Endothelial cell of umbilical vein (primary cell): ENCODE measurements at regions of chr3 and their contacts with region 1.

Region 1: GRCh38 chr3:151918253-151919029 is 45.0 kb downstream of the SUCNR1 start:
- DNase-seq: peak; percentile 72
- H3K4me3 ChIP-seq: no peak overlapping the region
- H3K27ac ChIP-seq: peak overlapping the region; percentile 14
- H3K4me1 ChIP-seq: peaks cover under 1% of the 10 kb centered on the region
- H3K27me3 ChIP-seq: no peaks in the 10 kb centered on the region
- CTCF ChIP-seq: peak; percentile 34 to 43
- POLR2A ChIP-seq: no peak

Region 2: DNA sequence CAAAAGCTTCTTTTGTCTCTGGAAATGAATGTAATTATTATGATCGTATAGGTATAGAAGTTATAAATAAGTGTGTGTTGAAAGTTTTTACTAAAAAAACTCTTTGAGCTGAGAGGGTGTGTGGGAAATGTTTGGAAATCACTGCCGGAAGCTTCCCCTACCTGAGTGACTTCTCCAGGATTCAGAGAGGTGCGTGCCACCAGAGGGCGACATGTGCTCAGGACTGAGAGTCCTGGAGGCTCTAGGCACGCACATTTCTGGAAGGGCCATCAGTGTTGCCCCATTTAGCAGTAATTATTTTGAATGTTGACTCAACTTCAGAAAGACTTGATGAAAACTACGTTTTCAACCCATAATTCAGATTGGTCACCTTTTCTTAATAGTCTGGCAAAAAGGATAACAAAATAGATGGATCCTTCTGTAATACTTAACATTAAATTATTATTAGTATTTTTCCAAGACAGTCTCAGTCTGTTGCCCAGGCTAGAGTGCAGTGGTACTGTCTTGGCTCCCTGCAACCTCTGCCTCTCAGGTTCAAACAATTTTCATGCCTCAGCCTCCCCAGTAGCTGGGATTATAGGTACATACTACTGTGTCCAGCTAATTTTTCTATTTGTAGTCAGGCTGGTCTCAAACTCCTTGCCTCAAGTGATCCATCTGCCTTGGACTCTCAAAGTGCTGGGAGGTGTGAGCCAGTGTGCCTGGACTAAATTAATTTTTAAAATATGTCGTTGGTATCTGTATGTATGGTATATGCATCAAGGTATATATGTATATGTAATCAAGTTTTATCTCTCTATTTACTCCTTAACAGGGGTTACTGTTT is 750.0 kb before region 1 on chr3:
- CTCF ChIA-PET with region 1: interaction called, 4 read pairs
- POLR2A ChIA-PET with region 1: no interaction called
- dilution Hi-C with region 1: no loop called
- intact Hi-C with region 1: loop called (anchors 1 kb)
- DNase-seq: peak; percentile 38
- H3K4me3 ChIP-seq: no peak overlapping the region
- H3K27ac ChIP-seq: no peak overlapping the region
- H3K4me1 ChIP-seq: no peaks in the 10 kb centered on the region
- H3K27me3 ChIP-seq: no peaks in the 10 kb centered on the region
- CTCF ChIP-seq: peak; percentile 68 to 76
- POLR2A ChIP-seq: no peak

Region 3: GRCh38 chr3:151282921-151283320 is 635.5 kb before region 1 on chr3:
- CTCF ChIA-PET with region 1: no interaction called
- POLR2A ChIA-PET with region 1: no interaction called
- dilution Hi-C with region 1: no loop called
- intact Hi-C with region 1: loop called (anchors 1 kb)
- DNase-seq: peak; percentile 58
- H3K4me3 ChIP-seq: no peak overlapping the region
- H3K27ac ChIP-seq: no peak overlapping the region
- H3K4me1 ChIP-seq: no peaks in the 10 kb centered on the region
- H3K27me3 ChIP-seq: peaks cover 0 to 6% of the 10 kb centered on the region in 2 experiments
- CTCF ChIP-seq: peak; percentile 30 to 42
- POLR2A ChIP-seq: no peak

Region 4: GRCh38 chr3:151439652-151440129 is 478.8 kb before region 1 on chr3:
- CTCF ChIA-PET with region 1: interaction called, 54 read pairs
- POLR2A ChIA-PET with region 1: no interaction called
- dilution Hi-C with region 1: no loop called
- intact Hi-C with region 1: loop called (anchors 1 kb)
- DNase-seq: peak; percentile 65
- H3K4me3 ChIP-seq: no peak overlapping the region
- H3K27ac ChIP-seq: no peak overlapping the region
- H3K4me1 ChIP-seq: no peaks in the 10 kb centered on the region
- H3K27me3 ChIP-seq: no peaks in the 10 kb centered on the region
- CTCF ChIP-seq: peak; percentile 45 to 51
- POLR2A ChIP-seq: no peak

Region 5: DNA sequence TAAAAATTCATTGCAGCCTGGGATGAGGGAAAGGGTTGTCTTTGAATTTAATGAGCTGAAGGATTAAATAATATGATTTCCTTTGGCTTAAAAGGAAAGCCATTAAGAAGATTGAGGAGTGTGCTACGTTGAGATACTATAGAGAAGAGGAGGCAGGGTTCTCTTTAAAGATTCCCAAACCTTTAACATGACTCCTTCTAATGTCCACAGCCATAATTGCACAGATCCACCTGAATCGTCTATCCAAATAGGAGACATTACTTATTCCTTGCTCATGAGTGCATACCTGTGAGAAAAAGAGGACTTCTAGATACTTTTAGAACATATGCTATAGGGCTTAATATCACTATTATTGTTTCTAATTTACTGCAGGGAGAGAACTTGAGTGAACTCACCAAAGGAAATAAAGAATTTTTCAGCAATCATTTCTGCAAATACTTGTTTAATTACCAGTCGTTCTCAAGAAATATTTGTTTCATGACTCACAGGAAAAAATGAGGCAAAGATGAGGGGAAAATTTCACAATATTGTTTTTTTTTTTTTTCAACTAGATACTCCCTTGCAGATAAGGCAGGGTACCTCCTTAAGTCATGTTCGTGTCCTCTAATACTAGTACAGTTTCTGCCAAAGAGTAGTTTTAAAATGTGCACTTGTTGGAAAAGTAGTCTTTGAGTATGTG is 53.9 kb before region 1 on chr3:
- CTCF ChIA-PET with region 1: interaction called, 4 read pairs
- POLR2A ChIA-PET with region 1: no interaction called
- dilution Hi-C with region 1: no loop called
- intact Hi-C with region 1: loop called (anchors 2 kb)
- DNase-seq: peak; percentile 84
- H3K4me3 ChIP-seq: peak overlapping the region in 1 of 3 experiments; percentile 17
- H3K27ac ChIP-seq: peak overlapping the region; percentile 66
- H3K4me1 ChIP-seq: peaks cover 31% of the 10 kb centered on the region
- H3K27me3 ChIP-seq: no peaks in the 10 kb centered on the region
- CTCF ChIP-seq: no peak
- POLR2A ChIP-seq: no peak

Region 6: DNA sequence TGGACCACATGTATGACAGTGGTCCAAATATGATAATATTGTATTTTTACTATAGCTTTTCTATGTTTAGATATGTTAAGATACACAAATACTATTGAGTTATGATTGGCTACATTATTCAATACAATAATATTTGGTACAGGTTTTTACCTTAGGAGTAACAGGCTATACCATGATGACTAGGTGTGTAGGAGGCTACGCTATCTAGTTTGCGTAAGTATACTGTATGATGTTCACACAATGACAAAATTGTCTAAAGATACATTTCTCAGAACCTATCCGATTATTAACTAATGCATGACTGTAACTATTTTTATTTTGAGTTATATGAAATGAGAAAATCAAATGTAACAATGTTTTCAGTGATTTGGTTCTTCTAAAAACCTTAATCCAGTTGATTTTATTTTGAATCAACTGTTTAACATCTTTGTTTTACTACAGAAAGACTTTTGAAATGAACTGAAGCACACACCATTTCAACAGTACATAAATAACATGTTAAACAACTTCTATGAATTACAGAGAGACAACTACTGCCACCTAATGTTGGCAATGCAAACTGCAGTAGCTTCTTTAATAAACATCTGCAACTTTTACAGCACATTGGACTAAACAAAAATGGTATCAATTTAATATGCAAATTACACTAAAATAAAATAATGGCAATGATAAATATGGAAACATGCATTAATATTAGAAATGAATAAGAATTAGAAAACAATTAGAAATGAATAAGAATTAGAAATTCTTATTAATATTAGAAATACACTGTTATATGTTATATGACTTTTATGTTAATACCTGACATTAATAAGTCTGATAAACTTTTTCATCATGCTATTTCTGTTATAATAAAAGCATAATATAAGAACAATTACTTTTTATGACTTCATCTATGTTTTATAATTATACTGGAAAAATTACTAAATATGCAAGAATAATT is 606.0 kb after region 1 on chr3:
- CTCF ChIA-PET with region 1: interaction called, 5 read pairs
- POLR2A ChIA-PET with region 1: no interaction called
- dilution Hi-C with region 1: no loop called
- intact Hi-C with region 1: loop called (anchors 5 kb)
- DNase-seq: peak; percentile 73
- H3K4me3 ChIP-seq: no peak overlapping the region
- H3K27ac ChIP-seq: no peak overlapping the region
- H3K4me1 ChIP-seq: no peaks in the 10 kb centered on the region
- H3K27me3 ChIP-seq: no peaks in the 10 kb centered on the region
- CTCF ChIP-seq: peak; percentile 48 to 54
- POLR2A ChIP-seq: no peak